ENCODE measurements at regions of chr12 and their contacts with region 1.

Region 1: GRCh38 chr12:2682296-2683251 is 112.2 kb upstream of the FKBP4 start:
- DNase-seq: peak in 7 of 9 donors; percentile 37 to 70 (median 59)
- ATAC-seq: peak; percentile 71
- H3K4me3 ChIP-seq: no peak overlapping the region
- H3K4me3 Mint-ChIP-seq: peak overlapping the region in 3 of 10 donors; percentile 43 to 67 (median 47)
- H3K27ac ChIP-seq: no peak overlapping the region
- H3K27ac Mint-ChIP-seq: peak overlapping the region; percentile 76 to 98 (median 88)
- H3K4me1 ChIP-seq: no peaks in the 10 kb centered on the region
- H3K4me1 Mint-ChIP-seq: peaks cover 5 to 12% (median 9%) of the 10 kb centered on the region in 7 donors
- H3K27me3 ChIP-seq: no peaks in the 10 kb centered on the region
- H3K27me3 Mint-ChIP-seq: no peaks in the 10 kb centered on the region

Region 2: GRCh38 chr12:2752676-2753371 is 70.2 kb after region 1 on chr12:
- CTCF ChIA-PET with region 1: no interaction called
- POLR2A ChIA-PET with region 1: no interaction called
- intact Hi-C with region 1: loop called in 1 of 2 experiments (anchors 1 kb)
- DNase-seq: peak; percentile 62 to 89 (median 80)
- ATAC-seq: peak; percentile 100
- H3K4me3 ChIP-seq: no peak overlapping the region
- H3K4me3 Mint-ChIP-seq: no peak overlapping the region
- H3K27ac ChIP-seq: no peak overlapping the region
- H3K27ac Mint-ChIP-seq: peak overlapping the region in 1 of 9 donors; percentile 23
- H3K4me1 ChIP-seq: no peaks in the 10 kb centered on the region
- H3K4me1 Mint-ChIP-seq: peaks cover 0 to 8% (median 0%) of the 10 kb centered on the region in 7 donors
- H3K27me3 ChIP-seq: no peaks in the 10 kb centered on the region
- H3K27me3 Mint-ChIP-seq: peaks cover 30 to 61% (median 44%) of the 10 kb centered on the region in 5 donors

Region 3: GRCh38 chr12:3041558-3042164 is 359.1 kb after region 1 on chr12:
- CTCF ChIA-PET with region 1: no interaction called
- POLR2A ChIA-PET with region 1: no interaction called
- intact Hi-C with region 1: loop called in 1 of 2 experiments (anchors 1 kb)
- DNase-seq: peak in 7 of 9 donors; percentile 19 to 58 (median 29)
- ATAC-seq: peak; percentile 76
- H3K4me3 ChIP-seq: no peak overlapping the region
- H3K4me3 Mint-ChIP-seq: no peak overlapping the region
- H3K27ac ChIP-seq: no peak overlapping the region
- H3K27ac Mint-ChIP-seq: no peak overlapping the region
- H3K4me1 ChIP-seq: no peaks in the 10 kb centered on the region
- H3K4me1 Mint-ChIP-seq: peaks cover 0 to 5% (median 0%) of the 10 kb centered on the region in 7 donors
- H3K27me3 ChIP-seq: peaks cover 0 to 2% of the 10 kb centered on the region in 2 donors
- H3K27me3 Mint-ChIP-seq: peaks cover 15 to 40% (median 23%) of the 10 kb centered on the region in 5 donors

Measured in naive thymus-derived CD4-positive, alpha-beta T cell (primary cell).